AG04449 (cell line): ENCODE measurements at regions of chr2 and their contacts with region 1.

Region 1: GRCh38 chr2:234500394-234501006 is 3.6 kb upstream of the ARL4C start:
- DNase-seq: no peak
- H3K4me3 ChIP-seq: no peak overlapping the region
- CTCF ChIP-seq: peak; percentile 46

Region 2: DNA sequence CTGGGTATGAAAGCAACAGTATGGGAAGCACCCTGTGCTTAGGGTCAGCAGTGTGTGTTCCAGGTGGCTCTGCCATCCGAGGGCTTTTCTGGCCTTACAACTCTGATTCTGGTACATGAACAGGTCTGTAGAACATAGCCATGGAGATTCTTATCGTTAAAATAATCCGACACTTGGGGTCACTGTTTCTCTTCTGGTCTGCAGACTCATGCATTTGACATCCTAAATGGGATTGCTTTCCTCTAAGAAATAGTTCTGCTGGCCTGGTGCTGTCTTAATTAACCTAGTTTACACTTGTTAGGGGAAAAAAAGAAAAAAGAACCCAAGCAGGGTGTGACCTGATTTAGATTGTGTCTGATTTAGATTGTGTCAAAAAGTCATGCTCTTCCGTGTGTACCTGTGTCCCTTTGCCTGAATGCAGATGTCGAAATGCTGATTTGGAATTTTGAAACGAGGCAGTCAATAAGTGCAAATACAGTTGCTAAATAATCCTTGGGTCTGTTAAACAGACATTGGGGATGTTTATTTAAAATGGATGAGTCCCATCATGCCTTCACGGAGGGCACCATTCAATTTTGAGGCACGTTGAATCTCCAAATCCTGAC is 523.7 kb before region 1 on chr2:
- CTCF ChIA-PET with region 1: interaction called, 41 read pairs
- POLR2A ChIA-PET with region 1: interaction called, 3 read pairs
- DNase-seq: peak; percentile 17
- H3K4me3 ChIP-seq: no peak overlapping the region
- CTCF ChIP-seq: peak; percentile 49

Region 3: GRCh38 chr2:233982421-233983121 is 517.9 kb before region 1 on chr2:
- CTCF ChIA-PET with region 1: interaction called, 41 read pairs
- POLR2A ChIA-PET with region 1: interaction called, 4 read pairs
- DNase-seq: peak; percentile 82
- H3K4me3 ChIP-seq: no peak overlapping the region
- CTCF ChIP-seq: no peak

Region 4: GRCh38 chr2:234146087-234146826 is 354.2 kb before region 1 on chr2:
- CTCF ChIA-PET with region 1: interaction called, 16 read pairs
- POLR2A ChIA-PET with region 1: interaction called, 3 read pairs
- DNase-seq: peak; percentile 55
- H3K4me3 ChIP-seq: no peak overlapping the region
- CTCF ChIP-seq: no peak

Region 5: GRCh38 chr2:234257856-234258561 is 242.5 kb before region 1 on chr2:
- CTCF ChIA-PET with region 1: interaction called, 13 read pairs
- POLR2A ChIA-PET with region 1: interaction called, 3 read pairs
- DNase-seq: peak; percentile 96
- H3K4me3 ChIP-seq: no peak overlapping the region; the same call in 1 of the 2 replicates
- CTCF ChIP-seq: peak; percentile 86

Region 6: GRCh38 chr2:234288974-234289455 is 211.5 kb before region 1 on chr2:
- CTCF ChIA-PET with region 1: interaction called, 23 read pairs
- POLR2A ChIA-PET with region 1: interaction called, 8 read pairs
- DNase-seq: no peak
- H3K4me3 ChIP-seq: no peak overlapping the region
- CTCF ChIP-seq: peak; percentile 74

Region 7: DNA sequence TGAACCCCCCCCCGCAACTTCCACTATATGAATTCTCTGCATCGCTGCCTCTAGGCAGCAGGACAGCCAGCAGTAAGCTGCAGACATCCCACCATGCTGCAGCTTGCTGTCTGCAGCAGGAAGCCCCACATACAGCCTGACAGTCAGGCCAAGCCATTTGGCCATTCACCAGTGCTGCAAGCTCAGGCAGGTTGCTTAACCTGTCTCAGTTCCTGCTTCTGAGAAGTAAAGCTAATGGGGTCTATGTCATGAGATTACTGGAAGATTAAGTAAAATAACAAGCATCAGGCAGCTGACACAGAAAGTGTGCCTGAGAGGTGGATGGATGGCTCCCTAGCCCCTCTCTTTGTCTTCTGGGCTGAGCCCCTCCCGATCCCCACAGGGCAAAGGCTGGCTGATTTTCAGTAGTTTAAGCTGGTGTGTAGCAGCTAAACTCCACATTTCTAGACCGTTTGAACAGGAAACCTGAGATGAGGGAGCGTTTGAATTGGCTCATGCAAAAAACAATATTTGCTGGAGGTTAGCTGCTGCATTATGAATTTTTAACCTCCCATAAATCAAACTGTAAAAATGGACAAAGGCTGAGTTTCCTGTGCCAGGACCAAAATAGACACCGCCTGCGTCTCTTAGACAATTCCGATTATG is 190.2 kb after region 1 on chr2:
- CTCF ChIA-PET with region 1: no interaction called
- POLR2A ChIA-PET with region 1: no interaction called
- DNase-seq: no peak
- H3K4me3 ChIP-seq: no peak overlapping the region
- CTCF ChIP-seq: no peak

Region 8: GRCh38 chr2:236317938-236318396 is 1817.5 kb after region 1 on chr2:
- CTCF ChIA-PET with region 1: no interaction called
- POLR2A ChIA-PET with region 1: no interaction called
- DNase-seq: no peak
- H3K4me3 ChIP-seq: no peak overlapping the region
- CTCF ChIP-seq: no peak